ENCODE measurements at regions of chr1 and their contacts with region 1.

Region 1: GRCh38 chr1:226248091-226248490 is 24.6 kb downstream of the MIXL1 start:
- DNase-seq: no peak
- H3K4me3 ChIP-seq: no peak overlapping the region
- H3K27ac ChIP-seq: peak overlapping the region; percentile 12
- H3K4me1 ChIP-seq: peaks cover 18% of the 10 kb centered on the region
- CTCF ChIP-seq: no peak

Region 2: DNA sequence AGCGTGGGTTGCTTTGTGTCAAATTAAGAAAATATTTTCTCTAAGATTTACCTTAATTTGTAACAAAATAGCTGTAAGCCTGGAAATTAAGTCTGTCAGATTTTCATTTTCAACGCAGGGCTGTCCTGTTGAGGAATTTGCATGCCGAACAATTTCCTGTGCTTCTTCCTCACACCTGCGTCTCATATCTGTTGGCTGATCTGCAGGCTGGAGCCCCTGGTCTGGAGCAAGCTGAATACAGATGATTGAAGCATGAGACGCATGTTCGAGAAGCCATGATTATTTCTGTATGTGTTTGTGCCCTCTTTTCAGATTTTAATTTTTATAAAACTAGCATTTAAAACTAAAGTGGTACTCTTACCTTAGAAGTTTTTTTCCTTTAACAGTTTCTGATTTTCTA is 14.8 kb before region 1 on chr1:
- CTCF ChIA-PET with region 1: no interaction called
- POLR2A ChIA-PET with region 1: interaction called, 10 read pairs
- intact Hi-C with region 1: no loop called
- DNase-seq: peak; percentile 93
- H3K4me3 ChIP-seq: peak overlapping the region; percentile 60
- H3K27ac ChIP-seq: peak overlapping the region; percentile 81
- H3K4me1 ChIP-seq: peaks cover 51% of the 10 kb centered on the region
- CTCF ChIP-seq: no peak

Region 3: DNA sequence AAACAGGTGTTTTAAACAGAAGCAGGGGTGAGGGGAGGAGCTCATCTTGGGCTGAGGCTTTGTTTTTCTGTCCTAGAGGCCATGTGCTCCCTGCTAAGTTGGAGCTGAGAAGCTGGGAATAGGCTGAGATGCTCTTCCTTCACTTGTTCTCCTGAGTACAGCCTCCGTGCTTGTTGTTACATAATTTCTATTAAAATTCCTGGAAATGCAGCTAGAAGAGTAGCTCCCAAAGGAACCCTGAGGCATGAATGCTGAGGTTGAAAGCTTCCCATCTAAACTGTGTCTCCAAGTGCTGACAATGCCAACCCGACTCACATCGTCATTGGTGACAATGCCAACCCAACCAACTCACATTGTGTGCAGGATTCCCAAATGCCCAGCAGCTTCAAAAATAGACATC is 503.6 kb after region 1 on chr1:
- CTCF ChIA-PET with region 1: no interaction called
- POLR2A ChIA-PET with region 1: no interaction called
- intact Hi-C with region 1: no loop called
- DNase-seq: peak; percentile 50
- H3K4me3 ChIP-seq: no peak overlapping the region
- H3K27ac ChIP-seq: no peak overlapping the region
- H3K4me1 ChIP-seq: peaks cover 44% of the 10 kb centered on the region
- CTCF ChIP-seq: no peak

Measured in OCI-LY7 (cell line).